PC-9 (cell line): ENCODE measurements at regions of chr1 and their contacts with region 1.

Region 1: DNA sequence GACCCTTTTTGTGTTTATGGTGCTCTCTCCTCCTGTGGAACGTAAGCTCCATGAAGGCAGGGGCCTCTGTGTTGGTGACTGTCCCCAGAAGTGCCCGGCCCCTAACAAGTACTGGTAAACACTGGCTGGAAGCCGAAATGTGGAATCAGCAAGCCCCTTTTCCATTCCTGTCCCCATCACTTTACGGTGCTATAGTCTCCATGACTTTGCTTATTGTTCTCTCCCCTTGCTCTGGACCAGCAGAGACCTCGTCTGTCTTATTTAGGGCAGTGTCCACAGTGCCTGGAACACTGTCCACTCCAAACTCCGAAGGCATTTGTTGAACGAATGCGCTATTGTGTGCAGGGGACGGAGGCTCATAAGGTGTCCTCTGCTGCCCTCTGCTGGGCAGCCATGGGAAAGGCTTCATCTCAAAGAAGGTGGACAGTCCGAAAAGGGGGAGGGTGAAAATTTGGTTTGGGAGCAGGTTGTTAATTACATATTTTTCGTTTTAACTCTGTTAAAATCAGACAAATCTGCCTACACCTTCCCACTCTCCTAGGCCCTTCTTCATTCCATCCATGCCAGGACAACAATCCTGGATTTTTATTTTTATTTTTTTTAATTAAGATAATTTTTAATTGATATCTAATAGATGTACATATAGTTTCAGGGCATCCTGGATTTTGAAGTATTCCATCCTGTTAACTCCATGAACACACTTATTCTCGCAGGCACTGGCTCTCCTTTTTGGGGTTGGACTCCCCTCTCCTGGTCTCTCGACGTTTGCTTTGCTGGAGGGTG is 115.6 kb downstream of the PGBD5 start:
- DNase-seq: peak; percentile 46 to 69
- H3K4me3 ChIP-seq: no peak overlapping the region
- H3K27ac ChIP-seq: no peak overlapping the region
- H3K4me1 ChIP-seq: peaks cover 20% of the 10 kb centered on the region
- H3K27me3 ChIP-seq: peaks cover 14% of the 10 kb centered on the region; the same call in 1 of the 2 replicates
- CTCF ChIP-seq: peak; percentile 94

Region 2: DNA sequence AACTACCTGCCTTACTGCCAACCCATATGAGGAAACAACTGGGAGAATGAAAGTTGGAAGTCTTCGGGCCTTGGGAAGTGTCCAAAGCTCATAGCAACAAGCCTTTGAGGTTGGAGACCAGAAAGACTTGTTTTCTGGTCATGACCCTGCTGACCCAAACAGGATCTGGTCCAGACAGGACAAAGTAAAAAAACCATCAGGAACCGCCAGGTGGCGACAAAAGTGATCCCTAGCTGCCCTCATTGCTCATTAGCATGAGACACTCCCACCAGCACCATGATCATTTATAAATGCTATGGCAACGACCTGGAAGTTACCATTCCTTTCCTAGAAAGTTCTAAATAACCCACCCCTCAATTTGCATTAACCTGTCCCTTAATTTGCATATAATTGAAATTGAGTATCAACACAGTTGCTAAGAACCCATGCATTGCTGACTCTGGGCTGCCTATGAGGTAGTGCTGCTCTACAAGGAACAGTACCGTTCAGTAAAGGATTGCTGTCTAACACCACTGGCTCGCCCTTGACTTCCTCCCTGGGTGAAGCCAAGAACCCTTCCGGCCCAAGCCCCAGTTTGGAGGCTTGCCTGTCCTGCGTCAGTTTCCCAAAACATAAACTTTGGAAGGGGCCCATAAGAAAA is 595.5 kb before region 1 on chr1:
- CTCF ChIA-PET with region 1: no interaction called
- POLR2A ChIA-PET with region 1: no interaction called
- intact Hi-C with region 1: loop called (anchors 5 kb)
- DNase-seq: peak; percentile 51 to 72
- H3K4me3 ChIP-seq: no peak overlapping the region
- H3K27ac ChIP-seq: no peak overlapping the region
- H3K4me1 ChIP-seq: peaks cover 5% of the 10 kb centered on the region; the same call in 1 of the 2 replicates
- H3K27me3 ChIP-seq: no peaks in the 10 kb centered on the region
- CTCF ChIP-seq: peak; percentile 61

Region 3: GRCh38 chr1:229781453-229781852 is 529.1 kb before region 1 on chr1:
- CTCF ChIA-PET with region 1: no interaction called
- POLR2A ChIA-PET with region 1: no interaction called
- intact Hi-C with region 1: loop called (anchors 5 kb)
- DNase-seq: peak in 1 of 2 experiments; percentile 11
- H3K4me3 ChIP-seq: no peak overlapping the region
- H3K27ac ChIP-seq: no peak overlapping the region
- H3K4me1 ChIP-seq: no peaks in the 10 kb centered on the region
- H3K27me3 ChIP-seq: peaks cover 27% of the 10 kb centered on the region
- CTCF ChIP-seq: peak; percentile 41

Region 4: DNA sequence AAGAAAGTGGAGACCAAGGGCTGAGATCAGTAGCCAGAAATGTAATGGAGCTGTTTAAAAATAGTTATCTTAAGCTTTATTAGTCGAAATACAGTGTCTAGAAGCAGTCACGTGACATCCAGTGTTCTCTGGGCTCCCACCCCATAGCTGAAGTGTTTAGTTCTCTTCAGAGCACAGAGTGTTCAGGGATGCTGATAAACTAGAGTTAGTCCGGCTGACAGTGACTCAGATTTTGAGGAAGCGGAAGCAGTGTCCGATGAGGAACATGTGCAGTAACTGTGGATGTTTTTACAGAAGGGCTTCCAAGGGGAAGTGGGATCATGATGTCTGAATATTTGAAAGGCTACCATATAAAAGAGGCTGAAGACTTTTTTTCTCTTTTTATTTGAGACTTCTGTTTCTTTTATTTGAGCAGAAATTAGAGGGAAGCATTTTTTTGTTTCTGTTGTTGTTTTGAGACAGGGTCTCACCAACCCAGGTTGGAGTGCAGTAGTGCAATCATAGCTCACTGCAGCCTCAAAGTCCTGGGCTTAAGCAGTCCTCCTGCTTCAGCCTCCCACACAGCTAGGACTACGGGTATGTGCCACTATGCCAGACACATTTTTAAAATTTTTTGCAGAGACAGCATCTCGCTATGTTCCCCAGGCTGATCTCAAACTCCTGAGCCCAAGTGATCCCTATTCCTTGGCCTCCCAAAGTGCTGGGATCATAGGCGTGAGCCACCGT is 119.3 kb before region 1 on chr1:
- CTCF ChIA-PET with region 1: no interaction called
- POLR2A ChIA-PET with region 1: no interaction called
- intact Hi-C with region 1: no loop called
- DNase-seq: no peak
- H3K4me3 ChIP-seq: no peak overlapping the region
- H3K27ac ChIP-seq: no peak overlapping the region
- H3K4me1 ChIP-seq: peaks cover 4% of the 10 kb centered on the region; the same call in 1 of the 2 replicates
- H3K27me3 ChIP-seq: no peaks in the 10 kb centered on the region
- CTCF ChIP-seq: no peak

Region 5: DNA sequence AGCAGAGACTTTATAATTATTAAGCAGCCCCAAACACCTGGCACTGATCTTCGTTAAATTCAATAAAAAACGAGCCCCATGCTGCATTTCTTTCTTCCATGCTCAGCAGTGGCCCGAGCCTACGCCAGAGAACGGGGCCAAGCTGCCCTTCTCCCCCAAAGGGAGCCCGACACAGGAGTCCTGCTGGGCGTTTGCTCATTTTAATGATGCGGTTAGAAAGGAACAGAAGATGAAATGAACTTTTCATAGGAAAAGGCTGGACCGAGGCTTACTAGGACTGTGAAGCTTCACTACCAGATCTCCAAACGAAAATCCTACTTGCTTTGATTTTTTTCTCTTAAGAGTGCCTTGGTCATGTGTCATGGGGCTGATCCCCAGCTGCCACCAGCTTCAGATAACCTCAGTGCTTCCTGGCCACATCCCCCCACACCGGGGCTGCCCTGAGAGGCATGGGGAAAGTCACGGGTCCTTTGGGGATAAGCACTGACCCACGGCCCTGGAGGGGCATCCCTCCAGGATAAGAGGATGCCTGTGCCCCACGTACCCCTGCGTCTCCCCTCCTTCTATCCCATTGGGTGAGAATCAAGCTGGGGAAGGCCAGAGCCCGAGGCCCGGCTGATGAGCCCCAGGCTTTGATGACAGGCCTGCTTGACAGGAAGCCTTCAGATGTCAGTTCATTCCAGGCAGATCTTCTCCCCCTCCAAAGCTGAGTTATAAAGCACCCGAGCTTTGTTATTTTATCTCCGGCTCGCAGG is 81.4 kb after region 1 on chr1:
- CTCF ChIA-PET with region 1: no interaction called
- POLR2A ChIA-PET with region 1: no interaction called
- intact Hi-C with region 1: no loop called
- DNase-seq: no peak
- H3K4me3 ChIP-seq: no peak overlapping the region
- H3K27ac ChIP-seq: no peak overlapping the region
- H3K4me1 ChIP-seq: no peaks in the 10 kb centered on the region
- H3K27me3 ChIP-seq: peaks cover 53% of the 10 kb centered on the region
- CTCF ChIP-seq: no peak

Region 6: DNA sequence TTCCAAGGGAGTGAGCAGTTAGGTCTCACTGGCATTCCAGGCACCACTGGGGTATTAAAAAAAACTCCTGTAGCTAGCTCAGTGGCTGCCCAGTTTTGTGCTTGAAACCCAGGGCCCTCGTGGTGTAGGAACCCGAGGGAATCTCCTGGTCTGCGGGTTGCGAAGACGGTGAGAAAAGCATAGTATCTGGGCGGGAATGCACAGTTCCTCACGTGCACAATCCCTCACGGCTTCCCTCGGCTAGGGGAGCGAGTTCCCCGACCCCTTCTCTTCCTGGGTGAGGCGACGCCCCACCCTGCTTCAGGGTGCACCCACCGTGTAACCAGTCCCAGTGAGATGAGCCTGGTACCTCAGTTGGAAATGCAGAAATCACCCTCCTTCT is 166.0 kb after region 1 on chr1:
- CTCF ChIA-PET with region 1: no interaction called
- POLR2A ChIA-PET with region 1: no interaction called
- intact Hi-C with region 1: no loop called
- DNase-seq: no peak
- H3K4me3 ChIP-seq: no peak overlapping the region
- H3K27ac ChIP-seq: no peak overlapping the region
- H3K4me1 ChIP-seq: no peaks in the 10 kb centered on the region
- H3K27me3 ChIP-seq: peaks cover 78% of the 10 kb centered on the region
- CTCF ChIP-seq: no peak